Caco-2 (cell line): ENCODE measurements at regions of chr9 and their contacts with region 1.

Region 1: DNA sequence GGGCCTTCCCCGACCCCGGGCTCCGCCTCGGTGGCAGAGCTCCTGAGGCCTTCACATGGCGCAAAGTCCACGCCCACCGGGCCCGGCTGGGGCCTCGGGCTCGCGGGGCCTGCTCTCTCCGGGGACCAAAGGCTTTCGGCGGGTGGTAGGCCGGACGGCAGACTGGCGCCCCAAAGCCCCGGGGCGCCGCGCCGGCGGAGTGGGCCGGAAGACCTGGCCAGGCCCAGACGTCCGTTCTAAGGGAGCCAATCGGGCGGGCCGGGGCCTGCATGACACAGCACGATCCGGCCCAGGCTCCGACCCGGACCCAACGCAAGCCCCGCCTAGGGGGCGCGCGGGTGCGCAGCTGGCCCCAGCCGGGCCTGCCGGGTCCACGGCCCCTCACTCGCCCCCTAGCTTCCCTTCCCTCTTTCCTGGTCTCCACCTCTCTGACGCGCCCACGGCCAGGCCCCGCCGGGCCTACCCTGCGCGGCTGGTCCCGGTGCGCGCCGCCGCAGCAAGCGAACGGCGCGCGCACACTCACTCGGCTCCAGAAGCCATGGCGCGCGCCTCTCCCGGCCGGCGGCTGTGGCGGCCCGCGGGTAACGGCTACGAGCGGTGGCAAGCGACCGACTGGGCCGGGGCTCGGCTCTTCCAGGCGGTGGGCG is 488 bp downstream of the VCP start:
- DNase-seq: peak; percentile 86 to 94
- H3K4me3 ChIP-seq: peak overlapping the region; percentile 73
- H3K4me3 Mint-ChIP-seq: peak overlapping the region; percentile 93
- H3K27ac Mint-ChIP-seq: peak overlapping the region; percentile 97
- H3K4me1 ChIP-seq: peaks cover 12% of the 10 kb centered on the region
- H3K4me1 Mint-ChIP-seq: peaks cover 22% of the 10 kb centered on the region
- H3K27me3 ChIP-seq: no peaks in the 10 kb centered on the region
- H3K27me3 Mint-ChIP-seq: no peaks in the 10 kb centered on the region
- CTCF ChIP-seq: peak; percentile 41 to 52

Region 2: DNA sequence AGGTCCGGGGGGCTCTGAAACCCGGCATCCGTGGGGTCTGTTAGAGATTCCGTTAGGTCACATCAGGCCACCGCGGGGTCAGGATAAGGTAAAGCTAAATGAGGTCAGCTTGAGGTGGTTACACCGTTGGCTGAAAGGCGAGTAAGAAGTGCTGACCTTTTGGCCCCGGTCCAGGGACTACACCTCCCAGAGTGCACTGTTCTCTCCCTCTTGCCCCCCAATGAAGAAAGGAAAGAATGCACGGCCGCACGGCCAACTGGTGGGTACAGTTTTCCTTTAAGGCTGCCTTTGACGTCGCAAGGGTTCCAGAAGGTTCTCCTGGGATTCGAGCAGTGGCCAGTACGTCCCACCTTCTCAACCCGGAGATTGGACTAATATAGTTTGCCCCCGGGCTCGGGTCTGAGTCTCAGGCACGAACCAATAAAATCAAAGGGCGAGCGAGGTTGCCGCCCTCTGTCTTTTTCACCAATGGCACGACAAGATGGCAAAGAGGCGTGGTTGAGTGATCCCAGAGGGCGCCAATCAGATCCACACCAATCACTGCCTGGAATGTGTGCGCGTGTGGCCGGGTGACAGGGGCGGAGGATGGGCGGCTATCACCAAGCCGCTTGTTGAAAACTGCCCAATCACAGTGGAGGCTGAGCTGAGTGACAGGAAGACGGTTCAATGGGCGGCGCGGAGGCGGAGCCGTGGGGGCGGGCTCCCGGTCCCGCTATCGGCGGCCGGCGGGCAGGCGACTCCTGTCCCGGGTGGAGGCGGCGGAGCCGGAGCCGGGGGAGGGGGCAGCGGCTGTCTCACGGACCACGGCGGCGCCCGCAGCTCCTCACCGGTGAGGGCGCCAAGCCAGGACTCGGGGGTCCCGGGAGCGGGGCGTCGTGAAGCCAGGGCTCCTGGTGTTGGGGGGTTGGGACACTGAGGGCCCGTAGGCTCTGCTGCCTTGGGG is 82.7 kb before region 1 on chr9 and contains the start of gene DNAJB5:
- CTCF ChIA-PET with region 1: interaction called, 6 read pairs
- POLR2A ChIA-PET with region 1: interaction called, 8 read pairs
- intact Hi-C with region 1: loop called (anchors 1 kb)
- DNase-seq: peak; percentile 98 to 99
- H3K4me3 ChIP-seq: peak within 1 kb of the TSS; percentile 85
- H3K4me3 Mint-ChIP-seq: peak within 1 kb of the TSS; percentile 95
- H3K27ac Mint-ChIP-seq: peak within 1 kb of the TSS; percentile 91
- H3K4me1 ChIP-seq: peaks cover 8% of the 10 kb centered on the region
- H3K4me1 Mint-ChIP-seq: peaks cover 9% of the 10 kb centered on the region
- H3K27me3 ChIP-seq: no peaks in the 10 kb centered on the region; the same call in 1 of the 2 replicates
- H3K27me3 Mint-ChIP-seq: peaks cover 2% of the 10 kb centered on the region
- CTCF ChIP-seq: no peak
- total RNA-seq, gene DNAJB5: 3.1 and 3.4 TPM in 2 replicates

Region 3: DNA sequence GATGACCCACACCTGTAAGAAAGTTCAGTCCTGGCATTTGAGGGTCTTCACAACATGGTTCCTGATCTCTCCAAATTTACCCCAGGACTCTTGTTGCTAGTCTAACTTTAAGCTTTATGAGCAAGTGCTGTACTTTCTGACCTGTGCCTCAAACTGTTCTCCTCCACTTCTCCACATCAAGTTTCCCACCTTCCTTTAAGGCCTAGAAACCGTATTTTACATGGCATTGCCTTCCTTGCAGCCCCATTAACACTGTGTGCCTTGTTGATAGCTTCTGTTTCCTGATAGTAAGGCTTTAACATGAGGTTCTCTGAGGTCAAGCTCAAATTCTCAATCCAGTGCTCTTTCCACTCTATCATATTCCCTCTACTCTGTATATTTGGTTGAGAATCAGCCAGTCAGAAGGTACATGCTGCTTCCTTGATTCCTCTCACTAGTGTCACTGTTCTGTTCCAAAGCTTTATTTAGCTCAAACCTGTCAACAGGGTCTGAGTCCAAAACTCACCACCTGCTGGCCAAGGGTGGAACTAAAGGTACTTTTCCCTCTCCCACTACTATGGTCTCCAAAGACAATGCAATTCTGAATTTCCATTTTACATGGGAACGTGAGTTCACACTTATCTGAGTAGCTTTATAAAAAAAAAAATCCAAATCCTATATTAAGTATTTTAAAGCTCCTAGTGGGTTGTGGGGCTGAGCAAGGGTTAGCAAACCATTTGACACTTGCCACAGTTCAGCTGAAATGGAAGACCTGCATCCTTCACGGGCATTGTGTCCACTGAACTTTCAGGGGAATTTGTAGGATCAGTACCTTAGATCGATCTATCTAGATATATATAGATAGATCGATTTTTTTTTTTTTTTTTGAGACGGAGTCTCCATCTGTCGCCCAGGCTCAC is 20.6 kb before region 1 on chr9:
- CTCF ChIA-PET with region 1: interaction called, 9 read pairs
- POLR2A ChIA-PET with region 1: interaction called, 10 read pairs
- intact Hi-C with region 1: no loop called
- DNase-seq: peak; percentile 58 to 66
- H3K4me3 ChIP-seq: no peak overlapping the region
- H3K4me3 Mint-ChIP-seq: no peak overlapping the region
- H3K27ac Mint-ChIP-seq: no peak overlapping the region
- H3K4me1 ChIP-seq: no peaks in the 10 kb centered on the region
- H3K4me1 Mint-ChIP-seq: no peaks in the 10 kb centered on the region
- H3K27me3 ChIP-seq: no peaks in the 10 kb centered on the region
- H3K27me3 Mint-ChIP-seq: no peaks in the 10 kb centered on the region
- CTCF ChIP-seq: peak; percentile 74 to 75

Region 4: GRCh38 chr9:35096035-35096849 is 24.3 kb after region 1 on chr9 and contains the start of gene PIGO:
- CTCF ChIA-PET with region 1: interaction called, 4 read pairs
- POLR2A ChIA-PET with region 1: interaction called, 4 read pairs
- intact Hi-C with region 1: loop called (anchors 1 kb)
- DNase-seq: peak; percentile 93 to 96
- H3K4me3 ChIP-seq: peak within 1 kb of the TSS; percentile 83
- H3K4me3 Mint-ChIP-seq: peak within 1 kb of the TSS; percentile 85
- H3K27ac Mint-ChIP-seq: peak within 1 kb of the TSS; percentile 92
- H3K4me1 ChIP-seq: peaks cover 4% of the 10 kb centered on the region; the same call in 1 of the 2 replicates
- H3K4me1 Mint-ChIP-seq: no peaks in the 10 kb centered on the region
- H3K27me3 ChIP-seq: no peaks in the 10 kb centered on the region
- H3K27me3 Mint-ChIP-seq: no peaks in the 10 kb centered on the region
- CTCF ChIP-seq: peak; percentile 72 to 94
- total RNA-seq, gene PIGO: 38.7 and 41.5 TPM in 2 replicates

Region 5: GRCh38 chr9:35102926-35103659 is 31.2 kb after region 1 on chr9 and contains the start of gene STOML2:
- CTCF ChIA-PET with region 1: no interaction called
- POLR2A ChIA-PET with region 1: interaction called, 16 read pairs
- intact Hi-C with region 1: no loop called
- DNase-seq: peak; percentile 93 to 95
- H3K4me3 ChIP-seq: peak within 1 kb of the TSS; percentile 78
- H3K4me3 Mint-ChIP-seq: peak within 1 kb of the TSS; percentile 99
- H3K27ac Mint-ChIP-seq: peak within 1 kb of the TSS; percentile 99
- H3K4me1 ChIP-seq: no peaks in the 10 kb centered on the region; the same call in 1 of the 2 replicates
- H3K4me1 Mint-ChIP-seq: no peaks in the 10 kb centered on the region
- H3K27me3 ChIP-seq: no peaks in the 10 kb centered on the region
- H3K27me3 Mint-ChIP-seq: no peaks in the 10 kb centered on the region
- CTCF ChIP-seq: no peak
- total RNA-seq, gene STOML2: 235 and 239 TPM in 2 replicates

Region 6: GRCh38 chr9:35406183-35406956 is 334.4 kb after region 1 on chr9:
- CTCF ChIA-PET with region 1: no interaction called
- POLR2A ChIA-PET with region 1: no interaction called
- intact Hi-C with region 1: no loop called
- DNase-seq: no peak
- H3K4me3 ChIP-seq: no peak overlapping the region
- H3K4me3 Mint-ChIP-seq: no peak overlapping the region
- H3K27ac Mint-ChIP-seq: no peak overlapping the region
- H3K4me1 ChIP-seq: no peaks in the 10 kb centered on the region
- H3K4me1 Mint-ChIP-seq: no peaks in the 10 kb centered on the region
- H3K27me3 ChIP-seq: no peaks in the 10 kb centered on the region
- H3K27me3 Mint-ChIP-seq: no peaks in the 10 kb centered on the region
- CTCF ChIP-seq: no peak